Naive thymus-derived CD8-positive, alpha-beta T cell (primary cell): ENCODE measurements at regions of chr14 and their contacts with region 1.

Region 1: DNA sequence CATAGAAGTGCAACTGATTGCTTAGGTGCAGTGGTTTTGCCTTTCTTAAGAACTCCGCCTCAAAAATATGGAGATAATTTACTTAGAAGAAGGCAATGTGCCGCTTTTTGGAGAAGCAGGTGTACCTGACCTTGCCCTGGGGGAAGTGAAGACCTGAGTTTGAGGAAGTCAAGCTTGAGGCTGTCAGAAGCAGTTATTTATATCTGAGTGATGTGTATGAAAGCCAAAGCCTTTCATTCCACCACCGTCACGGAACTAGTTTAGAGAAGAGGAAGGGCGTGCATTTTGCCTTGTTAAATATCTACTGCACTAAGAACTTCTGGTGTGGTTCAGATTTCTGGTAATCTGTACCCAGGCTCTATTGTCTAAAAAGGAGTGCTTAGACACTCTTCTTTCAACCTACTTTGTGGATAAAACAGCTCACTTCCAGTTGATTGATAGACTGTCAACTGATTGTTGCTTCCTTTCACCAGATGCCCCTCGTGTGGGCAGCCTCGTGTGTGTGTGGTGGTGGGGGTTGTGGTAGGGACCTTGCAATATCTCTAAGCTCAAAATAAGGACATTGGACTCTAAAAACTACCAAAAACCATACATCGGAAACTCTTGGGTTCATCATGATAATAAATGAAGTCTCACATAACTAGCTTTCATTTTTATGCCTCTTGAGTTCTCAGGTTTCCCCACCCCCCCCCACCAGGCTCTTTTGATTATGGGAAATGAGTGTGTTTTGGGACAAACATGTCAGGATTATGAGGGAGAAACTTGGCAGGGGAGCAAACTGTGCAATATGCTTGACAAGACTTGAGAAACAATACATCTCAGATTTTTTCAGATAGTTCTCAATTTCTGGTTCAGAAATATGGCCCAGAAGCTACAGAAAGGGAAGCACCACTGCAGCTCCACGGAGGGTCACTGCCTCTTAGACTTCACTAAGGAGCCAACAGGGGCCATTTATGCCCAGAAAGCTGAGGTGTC is 78.6 kb downstream of the ARF6 start:
- DNase-seq: peak; percentile 19 to 91 (median 68)
- ATAC-seq: peak; percentile 86 to 91
- H3K4me3 Mint-ChIP-seq: peak overlapping the region; percentile 68 to 90 (median 83)
- H3K27ac Mint-ChIP-seq: peak overlapping the region; percentile 93 to 98 (median 96)
- H3K4me1 Mint-ChIP-seq: peaks cover 37 to 74% (median 62%) of the 10 kb centered on the region in 4 donors
- H3K27me3 Mint-ChIP-seq: no peaks in the 10 kb centered on the region

Region 2: GRCh38 chr14:49940808-49941421 is 30.5 kb before region 1 on chr14:
- POLR2A ChIA-PET with region 1: interaction called, 45 read pairs
- DNase-seq: peak in 3 of 10 donors; percentile 37 to 53 (median 50)
- ATAC-seq: peak; percentile 74
- H3K4me3 Mint-ChIP-seq: peak overlapping the region in 9 of 10 donors; percentile 29 to 68 (median 58)
- H3K27ac Mint-ChIP-seq: peak overlapping the region in 9 of 10 donors; percentile 18 to 88 (median 71)
- H3K4me1 Mint-ChIP-seq: peaks cover 27 to 61% (median 58%) of the 10 kb centered on the region in 4 donors
- H3K27me3 Mint-ChIP-seq: no peaks in the 10 kb centered on the region

Region 3: GRCh38 chr14:49946320-49947141 is 24.9 kb before region 1 on chr14:
- POLR2A ChIA-PET with region 1: interaction called, 45 read pairs
- DNase-seq: peak in 6 of 10 donors; percentile 9 to 64 (median 26)
- ATAC-seq: peak; percentile 75 to 76
- H3K4me3 Mint-ChIP-seq: peak overlapping the region; percentile 6 to 82 (median 70)
- H3K27ac Mint-ChIP-seq: peak overlapping the region; percentile 87 to 99 (median 92)
- H3K4me1 Mint-ChIP-seq: peaks cover 42 to 77% (median 70%) of the 10 kb centered on the region in 4 donors
- H3K27me3 Mint-ChIP-seq: no peaks in the 10 kb centered on the region

Region 4: DNA sequence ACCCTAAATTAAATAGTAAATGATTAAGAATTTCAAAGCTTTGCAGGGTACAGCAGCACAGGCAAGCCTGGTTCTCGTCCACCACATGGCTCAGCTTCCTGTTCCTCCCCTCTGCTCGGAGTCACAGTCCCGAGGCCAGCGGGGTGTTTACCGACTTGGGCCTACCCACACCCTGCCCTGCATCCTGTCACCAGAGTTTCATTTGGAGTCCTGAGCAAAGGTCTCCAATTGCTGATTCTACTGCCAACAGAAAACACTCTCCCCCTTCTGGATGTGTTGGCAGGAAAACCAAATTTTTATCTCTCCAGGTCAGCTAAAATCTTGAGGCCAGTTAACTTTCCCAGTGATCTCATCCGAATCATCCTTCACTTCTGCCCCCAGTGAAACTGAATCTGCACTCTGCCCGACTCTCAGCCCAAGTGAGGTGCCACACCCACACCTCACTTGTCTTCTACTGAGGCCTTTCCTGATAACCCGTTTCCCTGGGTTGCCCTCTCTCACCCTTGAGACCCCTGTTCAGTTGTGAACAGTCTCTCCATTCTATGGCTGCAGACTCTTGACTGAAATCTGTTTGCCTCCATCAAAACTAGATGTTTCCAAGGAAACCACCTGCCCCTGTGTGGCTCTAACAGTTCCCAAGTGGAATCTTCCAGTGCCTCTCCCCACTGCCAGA is 73.7 kb after region 1 on chr14:
- POLR2A ChIA-PET with region 1: interaction called, 14 read pairs
- DNase-seq: peak in 9 of 10 donors; percentile 23 to 83 (median 62)
- ATAC-seq: peak; percentile 71 to 82
- H3K4me3 Mint-ChIP-seq: peak overlapping the region; percentile 6 to 87 (median 64)
- H3K27ac Mint-ChIP-seq: peak overlapping the region; percentile 85 to 98 (median 92)
- H3K4me1 Mint-ChIP-seq: peaks cover 49 to 76% (median 76%) of the 10 kb centered on the region in 4 donors
- H3K27me3 Mint-ChIP-seq: no peaks in the 10 kb centered on the region

Region 5: DNA sequence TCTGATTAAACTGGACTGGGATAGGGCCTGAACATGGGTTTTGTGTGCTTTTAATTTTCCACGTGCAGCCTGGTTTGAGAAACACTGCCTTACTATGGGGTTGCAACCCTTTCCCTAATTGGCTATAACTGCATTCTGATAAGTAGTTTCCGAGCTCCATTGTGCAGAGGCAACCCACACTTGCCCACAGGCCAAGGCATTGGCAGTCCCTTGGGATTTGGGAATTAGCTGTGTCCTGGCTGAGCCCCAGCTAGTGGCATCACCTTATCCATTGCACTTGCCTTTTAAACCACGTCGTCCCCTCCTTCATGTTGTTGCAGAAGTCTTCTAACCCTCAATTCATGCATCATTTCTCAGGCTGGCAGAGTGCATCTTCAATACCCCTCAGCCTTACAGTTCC is 134.7 kb after region 1 on chr14:
- POLR2A ChIA-PET with region 1: interaction called, 12 read pairs
- DNase-seq: no peak
- ATAC-seq: no peak
- H3K4me3 Mint-ChIP-seq: no peak overlapping the region
- H3K27ac Mint-ChIP-seq: peak overlapping the region in 9 of 10 donors; percentile 16 to 90 (median 59)
- H3K4me1 Mint-ChIP-seq: peaks cover 5 to 38% (median 23%) of the 10 kb centered on the region in 4 donors
- H3K27me3 Mint-ChIP-seq: no peaks in the 10 kb centered on the region